Activated T-helper 1 cell treated with anti-CD3 and anti-CD28 coated beads, Interleukin-12 subunit alpha, Interleukin-12 subunit beta, Interleukin-2, Interleukin-4 antibody, amounts not matched to agents 30 ng/mL and 10 ng/mL and 1 ng/mL, durations not matched to agents 14 hours and 24 hours and 36 hours (primary cell): ENCODE measurements at regions of chr1 and their contacts with region 1.

Region 1: DNA sequence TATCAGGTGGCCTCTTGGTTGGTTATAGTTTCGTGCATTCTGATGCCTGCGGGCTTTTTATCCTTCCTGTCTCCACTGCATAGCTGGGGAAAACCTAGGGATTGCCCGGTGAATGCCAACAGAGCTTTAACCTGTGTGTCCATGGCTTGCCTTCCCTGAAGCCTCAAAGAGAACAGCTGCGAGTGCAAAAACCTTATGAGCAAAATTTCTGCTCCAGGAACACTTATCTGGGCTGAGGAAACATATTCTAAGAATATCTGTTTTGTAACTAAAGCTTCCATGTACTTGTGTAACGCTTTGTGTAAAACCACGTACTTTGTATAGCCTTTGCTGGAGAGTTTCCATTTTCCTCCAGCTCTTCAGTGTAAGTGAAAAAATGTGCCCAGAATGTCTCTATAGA is 7.2 kb downstream of the CNST start:
- DNase-seq: no peak
- H3K4me3 Mint-ChIP-seq: peak overlapping the region; percentile 5
- H3K27ac Mint-ChIP-seq: no peak overlapping the region
- H3K4me1 Mint-ChIP-seq: peaks cover 54% of the 10 kb centered on the region
- H3K27me3 Mint-ChIP-seq: no peaks in the 10 kb centered on the region

Region 2: GRCh38 chr1:246587606-246588005 is 14.1 kb after region 1 on chr1:
- intact Hi-C with region 1: loop called (anchors 2 kb)
- DNase-seq: no peak
- H3K4me3 Mint-ChIP-seq: no peak overlapping the region
- H3K27ac Mint-ChIP-seq: peak overlapping the region; percentile 5
- H3K4me1 Mint-ChIP-seq: peaks cover 26% of the 10 kb centered on the region
- H3K27me3 Mint-ChIP-seq: no peaks in the 10 kb centered on the region